HepG2 (cell line): ENCODE measurements at regions of chr10 and their contacts with region 1.

Region 1: GRCh38 chr10:50885097-50885859 is at the start of gene A1CF:
- DNase-seq: peak; percentile 89
- ATAC-seq: peak; percentile 87
- H3K4me3 ChIP-seq: peak within 1 kb of the TSS; percentile 74 to 85 (median 81)
- H3K27ac ChIP-seq: peak within 1 kb of the TSS; percentile 95
- H3K4me1 ChIP-seq: peaks cover 44% of the 10 kb centered on the region
- H3K27me3 ChIP-seq: no peaks in the 10 kb centered on the region
- CTCF ChIP-seq: no peak
- EP300 ChIP-seq: peak in 1 of 2 experiments; percentile 69; a peak in 1 of 4 replicates
- POLR2A ChIP-seq: peak; percentile 68 to 91
- RAD21 ChIP-seq: no peak
- total RNA-seq, gene A1CF: 58.1 and 102 TPM in 2 replicates

Region 2: GRCh38 chr10:50807851-50808776 is 77.2 kb before region 1 on chr10:
- CTCF ChIA-PET with region 1: no interaction called
- POLR2A ChIA-PET with region 1: no interaction called
- in situ Hi-C with region 1: no loop called
- intact Hi-C with region 1: loop called (anchors 2 kb)
- DNase-seq: peak; percentile 88
- ATAC-seq: peak; percentile 100
- H3K4me3 ChIP-seq: no peak overlapping the region
- H3K27ac ChIP-seq: peak overlapping the region; percentile 71
- H3K4me1 ChIP-seq: peaks cover 24% of the 10 kb centered on the region
- H3K27me3 ChIP-seq: no peaks in the 10 kb centered on the region
- CTCF ChIP-seq: no peak
- EP300 ChIP-seq: peak; percentile 56 to 64; a peak in 3 of 4 replicates
- POLR2A ChIP-seq: no peak
- RAD21 ChIP-seq: no peak

Region 3: DNA sequence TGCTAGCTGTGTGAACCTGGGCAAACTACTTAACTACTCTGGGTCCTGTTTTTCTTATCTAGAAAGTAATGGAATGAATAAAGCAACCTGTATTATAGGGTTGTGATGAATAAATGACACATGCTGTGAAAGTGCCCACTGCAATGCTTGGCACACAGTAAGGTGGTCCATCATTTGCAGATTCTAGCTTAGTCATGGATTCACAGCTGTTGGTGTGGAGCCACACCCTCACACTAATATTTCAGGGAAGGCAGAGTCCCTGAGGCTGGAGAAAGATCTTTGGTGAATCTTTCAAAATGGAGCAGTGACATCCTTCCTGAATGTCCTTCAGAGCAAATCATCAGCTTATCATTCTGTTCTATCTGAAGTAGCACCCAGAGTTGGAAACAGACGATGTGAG is 60.5 kb before region 1 on chr10:
- CTCF ChIA-PET with region 1: no interaction called
- POLR2A ChIA-PET with region 1: no interaction called
- in situ Hi-C with region 1: no loop called
- intact Hi-C with region 1: no loop called
- DNase-seq: no peak
- ATAC-seq: no peak
- H3K4me3 ChIP-seq: no peak overlapping the region
- H3K27ac ChIP-seq: no peak overlapping the region
- H3K4me1 ChIP-seq: no peaks in the 10 kb centered on the region
- H3K27me3 ChIP-seq: no peaks in the 10 kb centered on the region
- CTCF ChIP-seq: no peak
- EP300 ChIP-seq: no peak
- POLR2A ChIP-seq: no peak
- RAD21 ChIP-seq: no peak

Region 4: GRCh38 chr10:50850578-50851230 is 34.6 kb before region 1 on chr10:
- CTCF ChIA-PET with region 1: no interaction called
- POLR2A ChIA-PET with region 1: no interaction called
- in situ Hi-C with region 1: no loop called
- intact Hi-C with region 1: loop called (anchors 5 kb)
- DNase-seq: no peak
- ATAC-seq: no peak
- H3K4me3 ChIP-seq: no peak overlapping the region
- H3K27ac ChIP-seq: no peak overlapping the region
- H3K4me1 ChIP-seq: no peaks in the 10 kb centered on the region
- H3K27me3 ChIP-seq: no peaks in the 10 kb centered on the region
- CTCF ChIP-seq: no peak
- EP300 ChIP-seq: no peak
- POLR2A ChIP-seq: no peak
- RAD21 ChIP-seq: no peak

Region 5: GRCh38 chr10:50874723-50875122 is 10.6 kb before region 1 on chr10:
- CTCF ChIA-PET with region 1: no interaction called
- POLR2A ChIA-PET with region 1: interaction called, 4 read pairs
- in situ Hi-C with region 1: no loop called
- intact Hi-C with region 1: loop called (anchors 2 kb)
- DNase-seq: no peak
- ATAC-seq: no peak
- H3K4me3 ChIP-seq: no peak overlapping the region
- H3K27ac ChIP-seq: no peak overlapping the region
- H3K4me1 ChIP-seq: peaks cover 46% of the 10 kb centered on the region
- H3K27me3 ChIP-seq: no peaks in the 10 kb centered on the region
- CTCF ChIP-seq: no peak
- EP300 ChIP-seq: no peak
- POLR2A ChIP-seq: no peak
- RAD21 ChIP-seq: no peak